ENCODE measurements at regions of chr5 and their contacts with region 1.

Region 1: DNA sequence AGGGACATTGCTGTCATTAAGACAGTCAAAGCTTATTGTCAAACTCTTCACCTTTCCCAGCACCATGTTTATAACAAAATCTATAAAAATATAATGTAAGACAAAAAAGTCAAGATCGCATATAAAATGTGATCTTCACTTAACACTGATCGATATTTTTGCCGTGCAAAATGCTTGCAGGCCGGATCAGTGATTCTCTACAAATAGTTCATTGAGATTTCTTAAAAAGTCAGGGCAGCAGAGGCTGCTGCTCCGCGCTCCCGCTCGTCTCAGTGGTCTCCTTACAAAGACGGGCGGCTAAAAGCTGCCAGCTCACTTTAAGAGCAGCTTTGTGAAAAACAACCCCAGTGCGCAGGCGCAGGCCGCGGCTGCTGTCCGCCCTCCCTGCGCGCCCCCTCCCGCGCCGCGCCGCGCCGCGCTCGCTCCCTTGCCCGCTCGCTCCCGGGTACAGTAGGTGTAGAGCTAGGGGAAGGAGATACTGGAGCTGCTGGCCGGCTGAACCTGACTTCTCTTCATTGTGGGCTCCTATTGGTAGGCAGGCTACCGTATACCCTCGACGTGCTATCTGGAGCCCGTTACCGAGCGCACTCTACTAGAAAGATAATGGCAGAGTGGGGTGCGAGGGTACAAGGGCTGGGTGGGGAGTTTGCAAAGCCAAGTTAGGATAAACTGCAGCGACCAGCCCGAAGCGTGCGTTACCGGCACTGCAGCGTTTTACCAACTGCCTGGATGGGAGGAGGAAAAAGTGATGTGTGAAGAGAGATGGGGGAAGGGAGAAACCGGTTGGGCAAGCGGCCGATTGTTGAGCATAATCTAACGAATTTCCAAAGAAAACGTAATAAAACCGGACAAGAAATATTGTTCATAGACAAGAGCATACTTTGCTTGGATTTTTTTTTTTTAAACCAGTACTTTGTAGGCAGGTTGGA is at the start of gene ARRDC3:
- DNase-seq: peak; percentile 98
- ATAC-seq: peak; percentile 72
- H3K4me3 ChIP-seq: peak within 1 kb of the TSS; percentile 33
- H3K4me1 ChIP-seq: peaks cover 11% of the 10 kb centered on the region
- CTCF ChIP-seq: no peak
- total RNA-seq, gene ARRDC3: 32.5 to 39.6 (median 38.0) TPM

Region 2: GRCh38 chr5:90689064-90689463 is 694.2 kb before region 1 on chr5:
- intact Hi-C with region 1: no loop called
- DNase-seq: no peak
- ATAC-seq: no peak
- H3K4me3 ChIP-seq: no peak overlapping the region
- H3K4me1 ChIP-seq: no peaks in the 10 kb centered on the region
- CTCF ChIP-seq: no peak

Region 3: GRCh38 chr5:90932052-90932699 is 451.1 kb before region 1 on chr5:
- intact Hi-C with region 1: loop called in 1 of 2 experiments (anchors 5 kb)
- DNase-seq: peak in 1 of 3 donors; percentile 78
- ATAC-seq: peak; percentile 81
- H3K4me3 ChIP-seq: no peak overlapping the region
- H3K4me1 ChIP-seq: no peaks in the 10 kb centered on the region
- CTCF ChIP-seq: peak; percentile 29

Region 4: DNA sequence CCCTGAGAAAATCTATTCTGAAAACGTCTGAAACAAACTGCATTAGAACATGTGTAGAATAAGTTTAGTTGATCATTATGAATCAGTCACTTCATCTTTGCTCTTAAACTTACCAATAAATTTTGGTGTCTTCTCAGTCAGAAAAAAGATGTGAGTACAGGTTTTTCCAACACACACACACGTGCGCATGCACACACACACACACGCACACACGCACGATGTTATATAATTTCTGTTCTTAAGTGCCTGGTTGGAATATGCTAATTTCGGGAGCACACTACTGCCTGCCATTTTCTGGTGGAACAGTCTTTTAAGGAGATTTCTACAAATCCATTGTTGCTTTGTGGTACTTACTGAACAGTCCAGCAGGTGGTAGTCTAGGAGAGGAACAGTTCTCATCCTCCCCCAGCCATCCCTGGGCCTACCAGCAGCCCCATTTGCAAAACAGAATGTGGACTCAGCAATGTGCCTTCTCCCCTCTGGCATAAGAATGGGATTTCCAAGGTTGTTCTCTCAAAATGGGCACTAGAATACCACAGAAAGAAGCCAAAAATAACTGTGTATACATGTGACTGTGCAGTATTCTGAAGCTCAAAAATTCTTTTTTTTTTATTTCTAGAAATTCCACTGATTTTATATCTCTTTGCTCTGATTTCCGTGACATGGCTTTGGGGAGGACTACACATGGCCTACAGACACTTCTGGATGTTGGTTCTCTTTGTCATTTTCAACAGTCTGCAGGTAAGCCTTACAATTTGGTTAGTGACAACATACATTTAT is 281.5 kb before region 1 on chr5:
- intact Hi-C with region 1: loop called (anchors 2 to 5 kb)
- DNase-seq: peak; percentile 54 to 80 (median 67)
- ATAC-seq: peak; percentile 95
- H3K4me3 ChIP-seq: no peak overlapping the region
- H3K4me1 ChIP-seq: peaks cover 9% of the 10 kb centered on the region
- CTCF ChIP-seq: peak; percentile 46

Region 5: DNA sequence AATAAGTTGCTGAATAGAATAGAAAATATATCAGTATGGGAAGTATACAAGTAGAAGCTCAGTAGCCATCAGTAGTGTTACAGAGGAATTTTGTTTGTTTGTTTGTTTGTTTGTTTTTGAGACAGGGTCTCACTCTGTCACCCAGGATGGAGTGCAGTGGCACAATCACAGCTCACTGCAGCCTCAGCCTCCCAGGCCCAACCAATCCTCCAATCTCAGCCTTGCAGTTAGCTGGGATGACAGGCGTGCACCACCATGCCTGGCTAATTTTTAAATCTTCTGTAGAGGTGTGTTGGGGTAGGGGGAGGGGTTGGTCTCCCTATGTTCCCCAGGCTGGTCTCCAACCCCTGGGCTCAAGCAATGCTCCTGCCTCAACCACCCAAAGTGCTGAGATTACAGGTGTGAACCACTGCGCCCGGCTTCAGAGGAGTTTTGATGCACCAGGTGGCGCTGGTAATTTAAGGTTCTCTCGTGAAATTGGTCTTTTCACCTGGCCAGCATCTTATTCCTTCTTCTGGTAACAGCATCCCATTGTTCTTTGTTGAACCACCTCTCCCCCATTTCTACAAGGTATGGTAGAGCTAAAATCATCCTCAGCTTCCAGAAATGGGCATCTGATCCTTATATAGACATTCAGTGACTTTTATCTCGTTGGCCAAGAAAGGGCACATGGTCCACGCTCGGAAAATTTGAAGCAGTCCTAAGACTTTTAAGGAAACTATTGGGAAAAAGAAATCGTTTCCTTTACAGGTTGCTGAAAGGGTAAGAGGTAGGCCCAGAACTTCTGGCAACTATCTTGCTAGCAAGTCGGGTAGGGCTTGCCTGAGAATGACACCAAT is 157.2 kb before region 1 on chr5:
- intact Hi-C with region 1: loop called in 1 of 2 experiments (anchors 5 kb)
- DNase-seq: peak in 2 of 3 donors; percentile 57 to 80
- ATAC-seq: peak; percentile 66
- H3K4me3 ChIP-seq: no peak overlapping the region
- H3K4me1 ChIP-seq: no peaks in the 10 kb centered on the region
- CTCF ChIP-seq: peak; percentile 12

Region 6: DNA sequence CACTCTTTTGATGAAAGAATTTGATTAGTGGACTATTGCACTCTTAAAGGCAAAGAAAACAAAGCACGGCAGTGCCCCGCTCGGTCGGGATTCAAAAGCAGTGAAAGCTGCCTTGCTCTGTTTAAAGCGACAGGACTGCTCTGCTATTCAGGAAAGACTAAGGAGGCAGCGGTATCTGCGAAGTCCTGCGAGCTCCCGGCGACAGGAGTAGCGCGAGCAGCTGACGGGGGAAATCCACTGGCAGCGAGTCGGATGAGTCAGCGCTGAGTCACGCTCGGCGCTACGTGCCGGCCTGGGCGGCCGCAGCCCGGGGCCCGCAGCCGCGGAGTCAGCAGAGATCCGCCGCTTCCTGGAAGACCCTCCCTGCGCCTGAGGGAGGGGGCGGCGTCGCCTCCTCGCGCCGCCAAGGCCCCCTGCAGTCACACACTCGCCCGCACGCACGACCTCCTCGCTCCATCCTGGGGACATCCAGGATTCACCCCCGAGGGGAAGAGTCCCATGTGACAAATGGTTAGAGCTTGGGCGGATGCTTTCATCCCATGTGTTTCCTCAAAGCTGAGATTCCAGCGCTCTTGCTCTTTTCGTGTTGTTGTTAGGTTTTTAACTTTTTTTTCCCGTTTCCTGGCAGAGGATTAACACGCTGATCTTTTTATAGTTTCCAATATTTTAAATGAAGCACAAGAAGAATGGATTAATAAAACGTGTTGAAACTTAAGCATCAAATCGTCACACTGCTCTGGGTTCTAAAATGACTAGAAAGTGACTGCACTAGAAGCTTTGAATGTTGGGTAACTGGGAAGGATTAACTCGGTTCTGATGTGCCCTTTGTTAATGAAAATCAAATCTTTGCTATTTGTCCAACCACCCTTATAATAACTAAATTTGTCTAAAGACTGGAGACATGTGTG is 102.7 kb before region 1 on chr5:
- intact Hi-C with region 1: loop called in 1 of 2 experiments (anchors 5 kb)
- DNase-seq: peak; percentile 94 to 95 (median 95)
- ATAC-seq: peak; percentile 97
- H3K4me3 ChIP-seq: no peak overlapping the region
- H3K4me1 ChIP-seq: peaks cover 8% of the 10 kb centered on the region
- CTCF ChIP-seq: no peak

Region 7: DNA sequence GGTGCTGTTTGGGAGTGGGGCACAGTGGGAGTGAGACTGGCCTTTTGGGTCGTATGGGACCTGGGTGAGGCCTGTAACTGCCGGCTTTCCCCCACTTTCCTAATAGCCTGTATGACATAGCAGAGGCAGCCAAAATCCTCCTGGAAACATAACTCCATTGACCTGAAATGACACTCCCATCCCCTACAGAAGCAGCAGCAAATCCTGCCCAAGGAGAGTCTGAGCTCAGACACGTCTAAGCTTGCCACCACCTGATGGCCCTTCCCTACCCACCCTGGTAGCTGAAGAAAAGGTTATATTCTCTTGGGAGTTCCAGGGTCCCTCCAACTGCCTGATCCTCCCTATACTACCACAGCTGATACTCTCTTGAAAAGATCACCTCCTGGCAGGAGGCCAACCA is 179.6 kb after region 1 on chr5:
- intact Hi-C with region 1: no loop called
- DNase-seq: no peak
- ATAC-seq: no peak
- H3K4me3 ChIP-seq: no peak overlapping the region
- H3K4me1 ChIP-seq: no peaks in the 10 kb centered on the region
- CTCF ChIP-seq: no peak

Region 8: GRCh38 chr5:91670563-91670962 is 287.3 kb after region 1 on chr5:
- intact Hi-C with region 1: no loop called
- DNase-seq: no peak
- ATAC-seq: no peak
- H3K4me3 ChIP-seq: no peak overlapping the region
- H3K4me1 ChIP-seq: no peaks in the 10 kb centered on the region
- CTCF ChIP-seq: no peak